GM12878 (cell line): ENCODE measurements at regions of chr3 and their contacts with region 1.

Region 1: DNA sequence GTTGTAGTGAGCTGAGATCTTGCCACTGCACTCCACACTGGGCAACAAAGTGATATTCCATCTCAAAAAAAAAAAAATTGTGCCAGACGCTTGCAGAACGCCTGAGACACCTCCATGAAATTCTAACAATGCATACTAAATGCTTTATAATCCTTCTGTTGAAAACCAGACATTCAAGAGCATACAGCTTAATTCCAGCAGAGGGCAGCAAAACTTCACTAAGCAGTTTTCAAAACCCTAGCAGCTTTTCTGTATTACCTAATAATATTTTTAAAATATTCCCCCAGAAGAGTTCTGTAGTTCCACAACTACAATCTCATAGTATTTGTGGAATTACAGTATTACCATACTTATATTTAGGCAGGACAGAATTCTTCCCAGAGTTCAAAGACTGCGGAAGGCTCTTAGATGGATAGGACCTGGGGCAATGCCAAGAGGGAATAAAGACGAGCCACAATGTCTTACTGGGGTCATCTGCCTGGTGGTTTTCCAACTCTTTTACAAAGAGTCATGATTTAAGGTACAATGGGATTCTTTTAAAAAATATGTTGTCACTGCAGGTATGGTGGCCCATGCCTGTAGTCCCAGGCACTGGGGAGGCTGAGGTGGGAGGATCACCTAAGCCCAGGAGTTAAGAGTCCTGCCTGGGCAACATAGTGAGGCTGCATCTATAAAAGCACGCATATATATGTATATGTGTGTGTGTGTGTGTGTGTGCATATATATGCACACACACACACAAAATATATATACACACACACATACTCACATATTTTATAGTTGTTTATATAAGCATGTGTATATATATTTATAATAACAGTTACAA is 19.6 kb upstream of the TASOR start:
- DNase-seq: no peak
- ATAC-seq: peak; percentile 85
- H3K4me3 ChIP-seq: no peak overlapping the region
- H3K27ac ChIP-seq: no peak overlapping the region
- H3K4me1 ChIP-seq: peaks cover 10% of the 10 kb centered on the region; the same call in 1 of the 2 replicates
- H3K27me3 ChIP-seq: no peaks in the 10 kb centered on the region
- CTCF ChIP-seq: peak; percentile 66 to 83 (median 70)
- EP300 ChIP-seq: no peak
- POLR2A ChIP-seq: no peak
- RAD21 ChIP-seq: peak; percentile 99

Region 2: GRCh38 chr3:56725175-56725574 is 22.5 kb after region 1 on chr3:
- CTCF ChIA-PET with region 1: interaction called, 17 read pairs
- POLR2A ChIA-PET with region 1: interaction called, 4 read pairs
- RAD21 ChIA-PET with region 1: interaction called, 20 read pairs
- SMC1A ChIA-PET with region 1: interaction called, 10 read pairs
- in situ Hi-C with region 1: no loop called
- intact Hi-C with region 1: no loop called
- DNase-seq: peak; percentile 87
- ATAC-seq: peak; percentile 95
- H3K4me3 ChIP-seq: peak overlapping the region; percentile 34
- H3K27ac ChIP-seq: peak overlapping the region; percentile 70
- H3K4me1 ChIP-seq: peaks cover 26% of the 10 kb centered on the region
- H3K27me3 ChIP-seq: no peaks in the 10 kb centered on the region
- CTCF ChIP-seq: no peak
- EP300 ChIP-seq: peak in 1 of 2 experiments; percentile 78; a peak in 1 of 4 replicates
- POLR2A ChIP-seq: no peak
- RAD21 ChIP-seq: peak; percentile 15; the same call in 1 of the 2 replicates

Region 3: DNA sequence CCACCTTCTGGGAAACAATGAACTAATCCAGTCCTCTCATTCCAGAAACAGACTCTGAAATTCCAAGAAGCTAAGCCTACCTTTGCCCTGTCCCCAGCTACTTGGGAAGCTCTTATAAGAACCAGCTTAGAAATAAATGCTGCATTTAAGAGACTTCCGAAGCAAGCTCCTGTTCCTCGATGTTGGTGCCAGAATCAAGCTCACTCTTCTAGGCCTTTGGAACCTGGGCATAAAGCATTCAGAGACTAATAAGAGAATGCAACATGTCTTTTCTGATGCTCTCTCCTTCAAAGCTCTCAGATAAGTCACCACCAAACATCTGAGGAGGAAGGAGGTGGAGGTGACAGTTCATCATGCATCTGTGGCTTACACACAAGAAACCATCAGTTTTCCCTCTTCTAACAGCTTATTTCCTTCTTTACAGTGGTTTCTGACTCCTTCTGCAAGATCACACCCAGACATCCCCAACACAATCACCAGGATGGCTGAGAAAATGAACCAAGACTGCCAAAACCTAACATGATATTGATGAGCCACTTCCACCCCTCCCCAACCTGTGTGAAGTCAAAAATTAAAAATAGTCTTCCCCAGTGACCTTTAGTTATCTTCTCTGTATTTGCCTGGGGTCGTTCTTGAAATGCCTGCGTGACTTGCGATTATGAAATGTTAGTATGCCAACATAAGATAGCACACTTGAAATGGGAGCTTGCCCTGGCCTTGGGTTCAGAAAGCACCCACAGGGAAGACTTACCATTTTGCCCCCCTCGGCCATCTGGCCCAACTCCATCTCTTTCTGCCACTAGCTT is 87.5 kb after region 1 on chr3:
- CTCF ChIA-PET with region 1: interaction called, 16 read pairs
- POLR2A ChIA-PET with region 1: interaction called, 6 read pairs
- RAD21 ChIA-PET with region 1: interaction called, 4 read pairs
- SMC1A ChIA-PET with region 1: interaction called, 411 read pairs
- in situ Hi-C with region 1: no loop called
- intact Hi-C with region 1: no loop called
- DNase-seq: no peak
- ATAC-seq: no peak
- H3K4me3 ChIP-seq: peak overlapping the region; percentile 1; the same call in 1 of the 2 replicates
- H3K27ac ChIP-seq: 0 out of 2 replicates have a peak overlapping the region, but pooled peaks have one; percentile 22
- H3K4me1 ChIP-seq: peaks cover 45% of the 10 kb centered on the region
- H3K27me3 ChIP-seq: no peaks in the 10 kb centered on the region
- CTCF ChIP-seq: no peak
- EP300 ChIP-seq: no peak
- POLR2A ChIP-seq: no peak
- RAD21 ChIP-seq: no peak

Region 4: DNA sequence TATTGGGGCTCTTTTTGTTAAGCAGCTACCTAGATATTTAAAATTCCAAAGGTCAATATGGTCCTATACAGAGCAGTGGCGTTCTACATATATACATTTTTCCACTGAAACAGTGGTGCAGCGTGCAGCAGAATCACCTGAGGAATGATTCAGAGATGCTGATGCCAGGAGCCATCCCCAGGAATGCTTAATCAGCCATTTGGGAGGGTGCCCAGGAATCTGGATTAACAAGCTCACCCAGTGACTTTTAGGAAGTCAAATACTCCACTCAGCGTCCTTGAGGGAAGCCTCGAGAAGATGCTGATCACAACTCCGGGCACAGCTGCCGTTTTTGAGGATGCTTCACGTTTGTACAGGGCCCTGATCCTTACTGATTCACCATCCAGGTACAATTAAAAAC is 181.7 kb after region 1 on chr3:
- CTCF ChIA-PET with region 1: no interaction called
- POLR2A ChIA-PET with region 1: no interaction called
- RAD21 ChIA-PET with region 1: no interaction called
- SMC1A ChIA-PET with region 1: no interaction called
- in situ Hi-C with region 1: no loop called
- intact Hi-C with region 1: no loop called
- DNase-seq: no peak
- ATAC-seq: no peak
- H3K4me3 ChIP-seq: no peak overlapping the region
- H3K27ac ChIP-seq: no peak overlapping the region
- H3K4me1 ChIP-seq: peaks cover 8% of the 10 kb centered on the region
- H3K27me3 ChIP-seq: no peaks in the 10 kb centered on the region
- CTCF ChIP-seq: no peak
- EP300 ChIP-seq: no peak
- POLR2A ChIP-seq: no peak
- RAD21 ChIP-seq: no peak

Region 5: GRCh38 chr3:56960234-56960917 is 257.7 kb after region 1 on chr3:
- CTCF ChIA-PET with region 1: interaction called, 4 read pairs
- POLR2A ChIA-PET with region 1: no interaction called
- RAD21 ChIA-PET with region 1: interaction called, 3 read pairs
- SMC1A ChIA-PET with region 1: interaction called, 10 read pairs
- in situ Hi-C with region 1: no loop called
- intact Hi-C with region 1: no loop called
- DNase-seq: peak; percentile 39
- ATAC-seq: peak; percentile 88
- H3K4me3 ChIP-seq: no peak overlapping the region
- H3K27ac ChIP-seq: no peak overlapping the region
- H3K4me1 ChIP-seq: peaks cover 23% of the 10 kb centered on the region
- H3K27me3 ChIP-seq: no peaks in the 10 kb centered on the region
- CTCF ChIP-seq: no peak
- EP300 ChIP-seq: peak in 1 of 2 experiments; percentile 50; a peak in 1 of 4 replicates
- POLR2A ChIP-seq: no peak
- RAD21 ChIP-seq: no peak

Region 6: GRCh38 chr3:57068437-57069089 is 365.9 kb after region 1 on chr3:
- CTCF ChIA-PET with region 1: interaction called, 3 read pairs
- POLR2A ChIA-PET with region 1: no interaction called
- RAD21 ChIA-PET with region 1: no interaction called
- SMC1A ChIA-PET with region 1: no interaction called
- in situ Hi-C with region 1: no loop called
- intact Hi-C with region 1: loop called (anchors 10 kb)
- DNase-seq: peak; percentile 95
- ATAC-seq: peak; percentile 97
- H3K4me3 ChIP-seq: no peak overlapping the region
- H3K27ac ChIP-seq: peak overlapping the region; percentile 8; the same call in 1 of the 2 replicates
- H3K4me1 ChIP-seq: peaks cover 4% of the 10 kb centered on the region
- H3K27me3 ChIP-seq: no peaks in the 10 kb centered on the region
- CTCF ChIP-seq: no peak
- EP300 ChIP-seq: peak; percentile 97 to 98
- POLR2A ChIP-seq: no peak
- RAD21 ChIP-seq: peak; percentile 13; the same call in 1 of the 2 replicates